WTC11 (cell line): ENCODE measurements at regions of chr6 and their contacts with region 1.

Region 1: GRCh38 chr6:151323791-151324487 is 67.4 kb downstream of the ZBTB2 start:
- DNase-seq: peak; percentile 90
- ATAC-seq: peak; percentile 88
- H3K4me3 Mint-ChIP-seq: peak overlapping the region; percentile 76
- H3K27ac Mint-ChIP-seq: peak overlapping the region; percentile 47; the same call in 1 of the 2 replicates
- H3K4me1 Mint-ChIP-seq: peaks cover 24% of the 10 kb centered on the region
- H3K27me3 Mint-ChIP-seq: peaks cover 12% of the 10 kb centered on the region; the same call in 1 of the 2 replicates
- CTCF ChIP-seq: peak; percentile 97

Region 2: GRCh38 chr6:150891888-150892485 is 432.0 kb before region 1 on chr6:
- CTCF ChIA-PET with region 1: interaction called, 34 read pairs
- POLR2A ChIA-PET with region 1: no interaction called
- DNase-seq: peak; percentile 74
- ATAC-seq: peak; percentile 87
- H3K4me3 Mint-ChIP-seq: no peak overlapping the region
- H3K27ac Mint-ChIP-seq: no peak overlapping the region
- H3K4me1 Mint-ChIP-seq: no peaks in the 10 kb centered on the region
- H3K27me3 Mint-ChIP-seq: no peaks in the 10 kb centered on the region
- CTCF ChIP-seq: peak; percentile 82

Region 3: GRCh38 chr6:151087861-151088598 is 235.9 kb before region 1 on chr6:
- CTCF ChIA-PET with region 1: interaction called, 16 read pairs
- POLR2A ChIA-PET with region 1: no interaction called
- DNase-seq: no peak
- ATAC-seq: peak; percentile 14; the same call in 1 of the 2 replicates
- H3K4me3 Mint-ChIP-seq: no peak overlapping the region
- H3K27ac Mint-ChIP-seq: peak overlapping the region; percentile 66
- H3K4me1 Mint-ChIP-seq: peaks cover 44% of the 10 kb centered on the region
- H3K27me3 Mint-ChIP-seq: no peaks in the 10 kb centered on the region
- CTCF ChIP-seq: no peak

Region 4: GRCh38 chr6:151224076-151224475 is 99.9 kb before region 1 on chr6:
- CTCF ChIA-PET with region 1: no interaction called
- POLR2A ChIA-PET with region 1: no interaction called
- DNase-seq: no peak
- ATAC-seq: no peak
- H3K4me3 Mint-ChIP-seq: no peak overlapping the region
- H3K27ac Mint-ChIP-seq: no peak overlapping the region
- H3K4me1 Mint-ChIP-seq: peaks cover 7% of the 10 kb centered on the region
- H3K27me3 Mint-ChIP-seq: no peaks in the 10 kb centered on the region; the same call in 1 of the 2 replicates
- CTCF ChIP-seq: no peak

Region 5: DNA sequence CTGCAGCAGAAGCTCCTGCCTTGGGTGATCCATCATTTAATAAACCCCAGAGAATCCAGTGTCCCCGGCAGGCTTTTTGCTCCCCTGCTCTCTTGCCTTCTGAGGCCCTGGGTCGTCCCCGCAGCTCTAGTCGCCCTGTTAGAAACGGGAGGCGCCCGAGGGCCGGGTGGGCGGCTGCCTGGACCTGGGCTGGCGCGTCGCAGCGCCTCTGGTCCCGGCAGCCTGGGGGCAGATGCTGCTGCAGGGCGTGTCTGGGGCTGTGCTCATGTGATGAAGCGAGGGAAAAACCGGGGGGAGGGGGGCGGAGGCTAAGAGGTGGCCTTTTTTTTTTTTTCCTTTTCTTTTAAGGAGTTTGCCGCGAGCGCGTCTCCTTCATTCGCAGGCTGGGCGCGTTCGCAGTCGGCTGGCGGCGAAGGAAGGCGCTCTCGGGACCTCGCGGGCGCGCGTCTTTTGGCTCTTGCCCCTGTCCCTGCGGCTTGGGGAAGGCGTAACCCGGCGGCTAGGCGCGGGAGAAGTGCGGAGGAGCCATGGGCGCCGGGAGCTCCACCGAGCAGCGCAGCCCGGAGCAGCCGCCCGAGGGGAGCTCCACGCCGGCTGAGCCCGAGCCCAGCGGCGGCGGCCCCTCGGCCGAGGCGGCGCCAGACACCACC is 83.8 kb before region 1 on chr6:
- CTCF ChIA-PET with region 1: interaction called, 19 read pairs
- POLR2A ChIA-PET with region 1: interaction called, 18 read pairs
- DNase-seq: peak; percentile 89
- ATAC-seq: peak; percentile 88
- H3K4me3 Mint-ChIP-seq: peak overlapping the region; percentile 90
- H3K27ac Mint-ChIP-seq: peak overlapping the region; percentile 95
- H3K4me1 Mint-ChIP-seq: peaks cover 34% of the 10 kb centered on the region
- H3K27me3 Mint-ChIP-seq: peaks cover 23% of the 10 kb centered on the region
- CTCF ChIP-seq: no peak

Region 6: GRCh38 chr6:151313066-151313491 is 10.9 kb before region 1 on chr6:
- CTCF ChIA-PET with region 1: interaction called, 16 read pairs
- POLR2A ChIA-PET with region 1: no interaction called
- DNase-seq: peak; percentile 70
- ATAC-seq: peak; percentile 95
- H3K4me3 Mint-ChIP-seq: no peak overlapping the region
- H3K27ac Mint-ChIP-seq: peak overlapping the region; percentile 86
- H3K4me1 Mint-ChIP-seq: peaks cover 25% of the 10 kb centered on the region
- H3K27me3 Mint-ChIP-seq: no peaks in the 10 kb centered on the region
- CTCF ChIP-seq: no peak